Heart right ventricle (tissue), 16 donors: ENCODE measurements at regions of chr16 and their contacts with region 1.

Region 1: GRCh38 chr16:30657866-30658730 is at the start of gene FBRS:
- DNase-seq: peak; percentile 100
- ATAC-seq: peak; percentile 85 to 95 (median 92)
- H3K4me3 ChIP-seq: peak within 1 kb of the TSS; percentile 64 to 91 (median 82)
- H3K27ac ChIP-seq: peak within 1 kb of the TSS; percentile 94 to 99 (median 98)
- H3K4me1 ChIP-seq: peaks cover 15 to 46% (median 44%) of the 10 kb centered on the region in 9 donors
- H3K27me3 ChIP-seq: no peaks in the 10 kb centered on the region
- CTCF ChIP-seq: peak; percentile 48 to 98 (median 91)
- total RNA-seq, gene FBRS: 24.6 to 38.5 (median 27.5) TPM

Region 2: GRCh38 chr16:30075507-30076275 is 582.4 kb before region 1 on chr16 and contains the start of gene PPP4C:
- intact Hi-C with region 1: loop called in 1 of 10 experiments (anchors 10 kb)
- DNase-seq: peak; percentile 92 to 93
- ATAC-seq: peak; percentile 86 to 97 (median 95)
- H3K4me3 ChIP-seq: peak within 1 kb of the TSS; percentile 86 to 100 (median 98)
- H3K27ac ChIP-seq: peak within 1 kb of the TSS; percentile 48 to 99 (median 96)
- H3K4me1 ChIP-seq: peaks cover 13 to 55% (median 41%) of the 10 kb centered on the region in 9 donors
- H3K27me3 ChIP-seq: no peaks in the 10 kb centered on the region
- CTCF ChIP-seq: peak in 3 of 9 donors; percentile 24 to 44 (median 34)
- total RNA-seq, gene PPP4C: 35.2 to 50.0 (median 42.4) TPM

Region 3: GRCh38 chr16:30585400-30586189 is 72.5 kb before region 1 on chr16 and contains the start of gene ZNF785:
- intact Hi-C with region 1: loop called in 1 of 10 experiments (anchors 1 kb)
- DNase-seq: peak; percentile 91 to 99
- ATAC-seq: peak; percentile 98 to 100 (median 99)
- H3K4me3 ChIP-seq: peak within 1 kb of the TSS; percentile 63 to 93 (median 78)
- H3K27ac ChIP-seq: peak within 1 kb of the TSS; percentile 67 to 97 (median 94)
- H3K4me1 ChIP-seq: peaks cover 3 to 26% (median 13%) of the 10 kb centered on the region in 9 donors
- H3K27me3 ChIP-seq: no peaks in the 10 kb centered on the region
- CTCF ChIP-seq: peak in 7 of 9 donors; percentile 19 to 54 (median 42)
- total RNA-seq, gene ZNF785: 2.8 to 8.4 (median 5.4) TPM

Region 4: GRCh38 chr16:30698139-30698815 is 40.2 kb after region 1 on chr16:
- intact Hi-C with region 1: loop called in 4 of 10 experiments (anchors 1 to 2 kb)
- DNase-seq: peak; percentile 99
- ATAC-seq: peak; percentile 86 to 94 (median 90)
- H3K4me3 ChIP-seq: peak overlapping the region; percentile 84 to 100 (median 94)
- H3K27ac ChIP-seq: peak overlapping the region; percentile 97 to 100 (median 100)
- H3K4me1 ChIP-seq: peaks cover 0 to 43% (median 31%) of the 10 kb centered on the region in 9 donors
- H3K27me3 ChIP-seq: no peaks in the 10 kb centered on the region
- CTCF ChIP-seq: no peak

Region 5: GRCh38 chr16:31243734-31244670 is 585.9 kb after region 1 on chr16:
- intact Hi-C with region 1: no loop called
- DNase-seq: no peak
- ATAC-seq: peak in 2 of 8 donors; percentile 18 to 42
- H3K4me3 ChIP-seq: no peak overlapping the region
- H3K27ac ChIP-seq: peak overlapping the region in 1 of 10 donors; percentile 29
- H3K4me1 ChIP-seq: peaks cover 0 to 22% (median 0%) of the 10 kb centered on the region in 9 donors
- H3K27me3 ChIP-seq: peaks cover 0 to 45% (median 15%) of the 10 kb centered on the region in 7 donors
- CTCF ChIP-seq: no peak